B cell (primary cell): ENCODE measurements at regions of chr12 and their contacts with region 1.

Region 1: GRCh38 chr12:8108808-8109398 is 14.5 kb upstream of the CLEC4A start:
- DNase-seq: peak; percentile 79
- ATAC-seq: peak; percentile 79
- H3K4me3 ChIP-seq: no peak overlapping the region
- H3K4me3 Mint-ChIP-seq: no peak overlapping the region
- H3K27ac ChIP-seq: no peak overlapping the region
- H3K27ac Mint-ChIP-seq: no peak overlapping the region
- H3K4me1 ChIP-seq: no peaks in the 10 kb centered on the region
- H3K4me1 Mint-ChIP-seq: no peaks in the 10 kb centered on the region
- H3K27me3 ChIP-seq: no peaks in the 10 kb centered on the region
- H3K27me3 Mint-ChIP-seq: no peaks in the 10 kb centered on the region
- CTCF ChIP-seq: peak; percentile 100

Region 2: DNA sequence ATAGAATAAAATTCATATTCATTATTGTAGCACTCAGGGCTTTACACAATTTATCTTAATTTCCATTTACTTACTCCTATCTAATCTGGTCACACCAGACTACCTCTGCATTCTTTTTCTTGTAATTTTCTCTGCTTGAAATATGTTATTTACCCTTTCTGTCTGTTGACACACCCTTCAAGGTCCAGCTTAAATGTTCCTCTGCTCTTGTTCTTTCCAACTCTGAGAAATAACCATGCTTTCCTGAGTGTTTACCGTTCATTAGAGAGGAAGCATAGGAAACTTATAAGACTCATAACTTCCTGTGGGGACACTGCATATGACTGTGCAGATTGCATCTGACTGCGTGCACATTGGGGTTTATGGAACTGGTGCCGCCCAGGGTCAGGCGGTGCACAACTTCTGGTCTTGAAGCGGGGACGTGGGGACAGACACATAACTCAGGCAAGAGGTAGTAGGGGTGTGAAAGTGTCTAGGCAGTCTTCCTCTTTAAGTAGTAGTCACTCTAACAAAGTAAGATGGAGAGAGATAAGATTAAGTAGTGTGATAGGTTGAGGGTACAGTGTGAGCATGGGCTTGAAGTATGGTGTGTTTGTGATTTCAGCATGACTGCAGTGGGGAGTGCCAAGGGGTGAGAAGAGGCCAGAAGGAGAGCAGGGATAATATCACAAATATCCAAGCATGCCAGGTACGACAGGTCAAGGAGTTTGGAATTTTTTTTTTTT is 118.9 kb before region 1 on chr12:
- CTCF ChIA-PET with region 1: no interaction called
- POLR2A ChIA-PET with region 1: no interaction called
- intact Hi-C with region 1: no loop called
- DNase-seq: no peak
- ATAC-seq: no peak
- H3K4me3 ChIP-seq: no peak overlapping the region
- H3K4me3 Mint-ChIP-seq: no peak overlapping the region
- H3K27ac ChIP-seq: no peak overlapping the region
- H3K27ac Mint-ChIP-seq: no peak overlapping the region
- H3K4me1 ChIP-seq: peaks cover 5 to 8% of the 10 kb centered on the region in 2 donors
- H3K4me1 Mint-ChIP-seq: peaks cover 8% of the 10 kb centered on the region
- H3K27me3 ChIP-seq: no peaks in the 10 kb centered on the region
- H3K27me3 Mint-ChIP-seq: no peaks in the 10 kb centered on the region
- CTCF ChIP-seq: no peak

Region 3: DNA sequence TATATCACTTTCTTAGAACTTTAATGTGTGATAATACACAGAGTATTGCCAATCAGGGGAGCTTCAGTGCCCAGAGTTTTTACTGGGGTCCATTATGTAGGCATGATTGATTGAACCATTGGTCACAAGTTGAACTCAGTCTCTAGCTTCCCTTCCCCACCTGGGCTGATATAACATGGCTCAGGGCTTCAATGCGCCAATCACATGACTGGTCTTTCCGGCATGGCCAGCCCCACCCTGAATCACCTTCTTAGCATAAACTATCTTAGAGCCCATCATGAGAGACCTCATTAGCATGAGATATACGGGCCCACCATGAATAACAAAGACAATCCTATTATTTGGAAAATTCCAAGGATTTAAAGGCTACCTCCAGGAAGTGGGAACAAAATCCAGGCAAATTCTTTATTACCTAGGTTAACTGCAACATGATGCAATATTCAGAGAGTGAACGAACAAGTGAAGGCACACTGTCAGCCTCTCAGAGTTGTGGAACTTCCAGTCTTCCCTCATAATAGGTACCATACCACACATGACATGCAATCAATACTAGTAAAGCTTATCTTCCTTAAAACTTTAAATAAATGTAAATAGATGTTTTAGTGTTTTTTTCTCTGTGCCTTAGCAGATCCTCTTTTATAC is 11.3 kb after region 1 on chr12:
- CTCF ChIA-PET with region 1: interaction called, 12 read pairs
- POLR2A ChIA-PET with region 1: no interaction called
- intact Hi-C with region 1: no loop called
- DNase-seq: no peak
- ATAC-seq: no peak
- H3K4me3 ChIP-seq: no peak overlapping the region
- H3K4me3 Mint-ChIP-seq: no peak overlapping the region
- H3K27ac ChIP-seq: no peak overlapping the region
- H3K27ac Mint-ChIP-seq: no peak overlapping the region
- H3K4me1 ChIP-seq: peaks cover 15 to 20% of the 10 kb centered on the region in 2 donors
- H3K4me1 Mint-ChIP-seq: peaks cover 24% of the 10 kb centered on the region
- H3K27me3 ChIP-seq: no peaks in the 10 kb centered on the region
- H3K27me3 Mint-ChIP-seq: no peaks in the 10 kb centered on the region
- CTCF ChIP-seq: no peak

Region 4: GRCh38 chr12:8226355-8226754 is 117.5 kb after region 1 on chr12:
- CTCF ChIA-PET with region 1: interaction called, 26 read pairs
- POLR2A ChIA-PET with region 1: no interaction called
- intact Hi-C with region 1: no loop called
- DNase-seq: no peak
- ATAC-seq: no peak
- H3K4me3 ChIP-seq: no peak overlapping the region
- H3K4me3 Mint-ChIP-seq: no peak overlapping the region
- H3K27ac ChIP-seq: no peak overlapping the region
- H3K27ac Mint-ChIP-seq: no peak overlapping the region
- H3K4me1 ChIP-seq: no peaks in the 10 kb centered on the region
- H3K4me1 Mint-ChIP-seq: peaks cover 2% of the 10 kb centered on the region
- H3K27me3 ChIP-seq: no peaks in the 10 kb centered on the region
- H3K27me3 Mint-ChIP-seq: no peaks in the 10 kb centered on the region
- CTCF ChIP-seq: no peak